Tibial artery (tissue), 4 donors: ENCODE measurements at regions of chr3 and their contacts with region 1.

Region 1: GRCh38 chr3:29285471-29286071 is 4.7 kb downstream of the RBMS3 start:
- DNase-seq: no peak
- H3K4me3 ChIP-seq: peak overlapping the region; percentile 56 to 64
- H3K27ac ChIP-seq: peak overlapping the region; percentile 82 to 89
- H3K4me1 ChIP-seq: peaks cover 0 to 42% (median 12%) of the 10 kb centered on the region in 4 donors
- H3K27me3 ChIP-seq: no peaks in the 10 kb centered on the region
- CTCF ChIP-seq: no peak

Region 2: DNA sequence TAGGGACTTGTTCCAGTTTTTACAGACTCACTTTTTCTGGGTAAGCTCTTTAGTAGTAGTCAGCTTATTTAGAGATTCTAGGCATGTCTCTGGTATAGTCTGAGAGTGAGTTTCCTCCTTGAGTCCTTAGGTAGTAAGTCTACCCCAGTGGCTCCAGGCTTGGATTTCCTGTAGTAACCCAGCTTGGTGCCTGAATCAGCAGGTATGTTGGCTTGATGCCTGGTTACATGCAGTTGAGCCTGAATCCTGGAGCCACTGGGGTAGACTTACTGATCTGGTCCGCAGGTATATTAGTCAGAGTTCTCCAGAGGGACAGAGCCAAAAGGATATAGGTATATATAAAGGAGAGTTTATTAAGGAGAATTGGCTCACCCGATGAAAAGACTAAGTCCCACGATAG is 90.5 kb before region 1 on chr3:
- intact Hi-C with region 1: no loop called
- DNase-seq: no peak
- H3K4me3 ChIP-seq: no peak overlapping the region
- H3K27ac ChIP-seq: no peak overlapping the region
- H3K4me1 ChIP-seq: no peaks in the 10 kb centered on the region
- H3K27me3 ChIP-seq: no peaks in the 10 kb centered on the region
- CTCF ChIP-seq: no peak

Region 3: GRCh38 chr3:29324180-29324651 is 38.6 kb after region 1 on chr3:
- intact Hi-C with region 1: loop called (anchors 5 kb)
- DNase-seq: peak; percentile 68 to 74
- H3K4me3 ChIP-seq: peak overlapping the region; percentile 37 to 38
- H3K27ac ChIP-seq: peak overlapping the region; percentile 55 to 80
- H3K4me1 ChIP-seq: peaks cover 0 to 57% (median 0%) of the 10 kb centered on the region in 4 donors
- H3K27me3 ChIP-seq: no peaks in the 10 kb centered on the region
- CTCF ChIP-seq: no peak

Region 4: GRCh38 chr3:29384640-29385039 is 99.1 kb after region 1 on chr3:
- intact Hi-C with region 1: no loop called
- DNase-seq: no peak
- H3K4me3 ChIP-seq: no peak overlapping the region
- H3K27ac ChIP-seq: peak overlapping the region; percentile 64 to 73
- H3K4me1 ChIP-seq: peaks cover 0 to 50% (median 22%) of the 10 kb centered on the region in 4 donors
- H3K27me3 ChIP-seq: no peaks in the 10 kb centered on the region
- CTCF ChIP-seq: no peak